ENCODE measurements at regions of chr7 and their contacts with region 1.

Region 1: GRCh38 chr7:113774182-113774807 is 144.5 kb downstream of the PPP1R3A start:
- DNase-seq: peak; percentile 62
- ATAC-seq: peak; percentile 67
- H3K4me3 ChIP-seq: no peak overlapping the region
- H3K27ac ChIP-seq: no peak overlapping the region
- H3K4me1 ChIP-seq: no peaks in the 10 kb centered on the region
- H3K27me3 ChIP-seq: no peaks in the 10 kb centered on the region
- CTCF ChIP-seq: peak; percentile 69
- POLR2A ChIP-seq: no peak
- RAD21 ChIP-seq: peak; percentile 66

Region 2: GRCh38 chr7:113230691-113231090 is 543.6 kb before region 1 on chr7:
- CTCF ChIA-PET with region 1: no interaction called
- POLR2A ChIA-PET with region 1: no interaction called
- dilution Hi-C with region 1: no loop called
- in situ Hi-C with region 1: no loop called
- intact Hi-C with region 1: no loop called
- DNase-seq: no peak
- ATAC-seq: no peak
- H3K4me3 ChIP-seq: no peak overlapping the region
- H3K27ac ChIP-seq: no peak overlapping the region
- H3K4me1 ChIP-seq: no peaks in the 10 kb centered on the region
- H3K27me3 ChIP-seq: no peaks in the 10 kb centered on the region
- CTCF ChIP-seq: no peak
- POLR2A ChIP-seq: no peak
- RAD21 ChIP-seq: no peak

Region 3: DNA sequence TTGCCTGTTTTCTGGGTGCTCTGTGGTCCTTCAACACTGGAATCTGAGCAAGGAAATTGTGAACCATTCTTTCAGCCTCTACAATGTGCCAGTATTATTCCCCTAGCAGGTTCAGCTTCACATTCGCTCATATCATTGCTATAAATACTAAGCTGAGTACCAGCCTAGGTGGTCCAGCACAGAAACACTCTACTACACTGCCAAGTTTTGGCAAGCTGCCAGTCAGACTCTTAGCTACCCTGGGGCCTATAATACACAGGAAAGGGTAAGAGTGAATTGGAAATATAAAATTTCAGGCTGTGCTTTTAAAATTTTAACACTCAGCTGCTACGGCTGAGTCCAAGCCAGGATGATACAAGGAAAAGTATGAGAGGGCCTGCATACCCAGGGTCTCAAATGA is 194.4 kb after region 1 on chr7:
- CTCF ChIA-PET with region 1: no interaction called
- POLR2A ChIA-PET with region 1: no interaction called
- dilution Hi-C with region 1: no loop called
- in situ Hi-C with region 1: no loop called
- intact Hi-C with region 1: no loop called
- DNase-seq: no peak
- ATAC-seq: no peak
- H3K4me3 ChIP-seq: no peak overlapping the region
- H3K27ac ChIP-seq: no peak overlapping the region
- H3K4me1 ChIP-seq: no peaks in the 10 kb centered on the region
- H3K27me3 ChIP-seq: no peaks in the 10 kb centered on the region
- CTCF ChIP-seq: no peak
- POLR2A ChIP-seq: no peak
- RAD21 ChIP-seq: no peak

Region 4: GRCh38 chr7:114021136-114021847 is 247.0 kb after region 1 on chr7:
- CTCF ChIA-PET with region 1: interaction called, 3 read pairs
- POLR2A ChIA-PET with region 1: no interaction called
- dilution Hi-C with region 1: no loop called
- in situ Hi-C with region 1: no loop called
- intact Hi-C with region 1: loop called (anchors 5 kb)
- DNase-seq: peak; percentile 7
- ATAC-seq: peak; percentile 65
- H3K4me3 ChIP-seq: no peak overlapping the region
- H3K27ac ChIP-seq: no peak overlapping the region
- H3K4me1 ChIP-seq: no peaks in the 10 kb centered on the region
- H3K27me3 ChIP-seq: no peaks in the 10 kb centered on the region
- CTCF ChIP-seq: no peak
- POLR2A ChIP-seq: no peak
- RAD21 ChIP-seq: no peak

Measured in IMR-90 (cell line).